Activated CD4-positive, alpha-beta T cell treated with anti-CD3 and anti-CD28 coated beads for 36 hours (primary cell): ENCODE measurements at regions of chr9 and their contacts with region 1.

Region 1: DNA sequence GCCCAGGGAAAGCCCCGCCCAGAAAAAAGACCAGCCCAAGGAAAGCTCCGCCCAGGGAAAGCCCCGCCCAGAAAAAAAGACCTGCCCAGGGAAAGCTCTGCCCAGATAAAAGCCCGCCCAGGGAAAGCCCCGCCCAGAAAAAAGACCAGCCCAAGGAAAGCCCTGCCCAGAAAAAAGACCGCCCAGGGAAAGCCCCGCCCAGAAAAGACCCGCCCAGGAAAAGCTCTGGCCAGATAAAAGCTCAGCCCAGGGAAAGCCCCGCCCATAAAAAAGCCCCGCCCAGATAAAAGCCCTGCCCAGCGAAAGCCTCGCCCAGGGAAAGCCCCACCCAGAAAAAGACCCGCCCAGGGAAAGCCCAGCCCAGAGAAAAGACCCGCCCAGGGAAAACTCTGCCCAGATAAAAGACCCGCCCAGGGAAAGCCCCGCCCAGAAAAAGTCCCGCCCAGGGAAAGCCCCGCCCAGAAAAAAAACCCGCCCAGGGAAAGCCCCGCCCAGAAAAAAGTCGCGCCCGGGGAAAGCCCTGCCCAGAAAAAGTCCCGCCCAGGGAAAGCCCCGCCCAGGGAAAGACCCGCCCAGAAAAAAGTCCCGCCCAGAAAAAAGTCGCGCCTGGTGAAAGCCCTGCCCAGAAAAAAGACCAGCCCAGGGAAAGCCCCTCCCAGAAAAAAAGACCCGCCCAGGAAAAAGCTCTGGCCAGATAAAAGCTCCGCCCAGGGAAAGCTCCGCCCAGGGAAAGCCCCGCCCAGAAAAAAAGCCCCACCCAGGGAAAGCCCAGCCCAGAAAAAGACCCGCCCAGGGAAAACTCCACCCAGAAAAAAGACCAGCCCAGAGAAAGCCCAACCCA is 11.9 kb downstream of the GRIN1 start:
- DNase-seq: peak; percentile 90
- ATAC-seq: peak; percentile 80
- H3K4me3 Mint-ChIP-seq: no peak overlapping the region
- H3K27ac Mint-ChIP-seq: no peak overlapping the region
- H3K4me1 Mint-ChIP-seq: peaks cover 8% of the 10 kb centered on the region
- H3K27me3 Mint-ChIP-seq: peaks cover 8% of the 10 kb centered on the region

Region 2: GRCh38 chr9:136978073-136978864 is 172.6 kb before region 1 on chr9:
- CTCF ChIA-PET with region 1: no interaction called
- POLR2A ChIA-PET with region 1: no interaction called
- intact Hi-C with region 1: loop called in 1 of 2 experiments (anchors 1 kb)
- DNase-seq: peak; percentile 87
- ATAC-seq: peak; percentile 47
- H3K4me3 Mint-ChIP-seq: no peak overlapping the region
- H3K27ac Mint-ChIP-seq: no peak overlapping the region
- H3K4me1 Mint-ChIP-seq: peaks cover 13% of the 10 kb centered on the region
- H3K27me3 Mint-ChIP-seq: no peaks in the 10 kb centered on the region

Region 3: GRCh38 chr9:137129456-137130175 is 21.2 kb before region 1 on chr9:
- CTCF ChIA-PET with region 1: interaction called, 3 read pairs
- POLR2A ChIA-PET with region 1: interaction called, 3 read pairs
- intact Hi-C with region 1: loop called in 1 of 2 experiments (anchors 1 kb)
- DNase-seq: peak; percentile 95
- ATAC-seq: peak; percentile 96
- H3K4me3 Mint-ChIP-seq: peak overlapping the region; percentile 89
- H3K27ac Mint-ChIP-seq: peak overlapping the region; percentile 70
- H3K4me1 Mint-ChIP-seq: peaks cover 21% of the 10 kb centered on the region
- H3K27me3 Mint-ChIP-seq: peaks cover 5% of the 10 kb centered on the region

Region 4: GRCh38 chr9:137453643-137454081 is 302.8 kb after region 1 on chr9:
- CTCF ChIA-PET with region 1: no interaction called
- POLR2A ChIA-PET with region 1: no interaction called
- intact Hi-C with region 1: loop called in 1 of 2 experiments (anchors 1 kb)
- DNase-seq: peak; percentile 84
- ATAC-seq: peak; percentile 83
- H3K4me3 Mint-ChIP-seq: no peak overlapping the region
- H3K27ac Mint-ChIP-seq: no peak overlapping the region
- H3K4me1 Mint-ChIP-seq: peaks cover 38% of the 10 kb centered on the region
- H3K27me3 Mint-ChIP-seq: no peaks in the 10 kb centered on the region